Breast epithelium (tissue), 4 donors: ENCODE measurements at regions of chr1 and their contacts with region 1.

Region 1: GRCh38 chr1:69139007-69139406 is 428.7 kb upstream of the LRRC7 start:
- DNase-seq: no peak
- H3K4me3 ChIP-seq: no peak overlapping the region
- H3K27ac ChIP-seq: no peak overlapping the region
- H3K4me1 ChIP-seq: no peaks in the 10 kb centered on the region
- H3K27me3 ChIP-seq: no peaks in the 10 kb centered on the region
- CTCF ChIP-seq: no peak
- POLR2A ChIP-seq: no peak

Region 2: GRCh38 chr1:68600049-68600661 is 538.9 kb before region 1 on chr1:
- intact Hi-C with region 1: no loop called
- DNase-seq: no peak
- H3K4me3 ChIP-seq: peak overlapping the region in 1 of 3 donors; percentile 41
- H3K27ac ChIP-seq: no peak overlapping the region
- H3K4me1 ChIP-seq: no peaks in the 10 kb centered on the region
- H3K27me3 ChIP-seq: no peaks in the 10 kb centered on the region
- CTCF ChIP-seq: peak in 2 of 3 donors; percentile 34 to 46
- POLR2A ChIP-seq: no peak

Region 3: GRCh38 chr1:69157046-69157756 is 18.2 kb after region 1 on chr1:
- intact Hi-C with region 1: loop called (anchors 1 kb)
- DNase-seq: no peak
- H3K4me3 ChIP-seq: no peak overlapping the region
- H3K27ac ChIP-seq: no peak overlapping the region
- H3K4me1 ChIP-seq: no peaks in the 10 kb centered on the region
- H3K27me3 ChIP-seq: no peaks in the 10 kb centered on the region
- CTCF ChIP-seq: no peak
- POLR2A ChIP-seq: no peak